IMR-90 (cell line): ENCODE measurements at regions of chr1 and their contacts with region 1.

Region 1: GRCh38 chr1:61453111-61453961 is 271.6 kb downstream of the TM2D1 start:
- DNase-seq: peak; percentile 86
- ATAC-seq: peak; percentile 98
- H3K4me3 ChIP-seq: no peak overlapping the region
- H3K27ac ChIP-seq: no peak overlapping the region
- H3K4me1 ChIP-seq: peaks cover 2% of the 10 kb centered on the region; the same call in 1 of the 2 replicates
- H3K27me3 ChIP-seq: no peaks in the 10 kb centered on the region; the same call in 1 of the 2 replicates
- CTCF ChIP-seq: peak; percentile 90
- POLR2A ChIP-seq: no peak
- RAD21 ChIP-seq: peak; percentile 80

Region 2: DNA sequence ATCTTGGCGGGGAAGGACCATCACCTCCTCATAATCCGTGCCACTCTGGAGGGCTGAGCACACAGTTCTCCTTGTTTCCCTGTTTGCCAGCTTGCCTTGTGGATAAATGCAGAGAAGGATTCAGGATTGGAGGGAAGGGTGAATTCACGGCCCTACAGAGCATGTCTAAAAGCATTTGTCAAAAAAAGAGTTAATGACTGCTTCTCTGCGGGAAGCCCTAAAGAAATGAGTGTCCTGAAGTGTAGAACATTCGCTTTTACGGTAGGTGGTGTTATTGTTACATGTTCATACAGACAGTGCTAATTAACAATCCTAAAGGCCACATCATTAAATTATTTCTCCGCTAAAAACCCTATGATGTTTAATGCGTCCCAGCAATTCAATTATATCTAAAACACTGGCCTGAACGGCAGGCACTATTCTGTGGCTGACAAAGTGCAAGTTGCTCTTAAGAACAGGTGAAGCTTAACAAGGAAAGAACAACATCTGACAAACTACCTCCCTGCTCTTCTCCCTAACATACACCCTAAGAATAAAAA is 483.3 kb before region 1 on chr1:
- CTCF ChIA-PET with region 1: no interaction called
- POLR2A ChIA-PET with region 1: no interaction called
- dilution Hi-C with region 1: no loop called
- in situ Hi-C with region 1: loop called (anchors 10 kb)
- intact Hi-C with region 1: loop called (anchors 1 kb)
- DNase-seq: peak; percentile 23
- ATAC-seq: peak; percentile 67; the same call in 1 of the 2 replicates
- H3K4me3 ChIP-seq: no peak overlapping the region
- H3K27ac ChIP-seq: no peak overlapping the region
- H3K4me1 ChIP-seq: no peaks in the 10 kb centered on the region
- H3K27me3 ChIP-seq: no peaks in the 10 kb centered on the region; the same call in 1 of the 2 replicates
- CTCF ChIP-seq: peak; percentile 48
- POLR2A ChIP-seq: no peak
- RAD21 ChIP-seq: peak; percentile 49

Region 3: DNA sequence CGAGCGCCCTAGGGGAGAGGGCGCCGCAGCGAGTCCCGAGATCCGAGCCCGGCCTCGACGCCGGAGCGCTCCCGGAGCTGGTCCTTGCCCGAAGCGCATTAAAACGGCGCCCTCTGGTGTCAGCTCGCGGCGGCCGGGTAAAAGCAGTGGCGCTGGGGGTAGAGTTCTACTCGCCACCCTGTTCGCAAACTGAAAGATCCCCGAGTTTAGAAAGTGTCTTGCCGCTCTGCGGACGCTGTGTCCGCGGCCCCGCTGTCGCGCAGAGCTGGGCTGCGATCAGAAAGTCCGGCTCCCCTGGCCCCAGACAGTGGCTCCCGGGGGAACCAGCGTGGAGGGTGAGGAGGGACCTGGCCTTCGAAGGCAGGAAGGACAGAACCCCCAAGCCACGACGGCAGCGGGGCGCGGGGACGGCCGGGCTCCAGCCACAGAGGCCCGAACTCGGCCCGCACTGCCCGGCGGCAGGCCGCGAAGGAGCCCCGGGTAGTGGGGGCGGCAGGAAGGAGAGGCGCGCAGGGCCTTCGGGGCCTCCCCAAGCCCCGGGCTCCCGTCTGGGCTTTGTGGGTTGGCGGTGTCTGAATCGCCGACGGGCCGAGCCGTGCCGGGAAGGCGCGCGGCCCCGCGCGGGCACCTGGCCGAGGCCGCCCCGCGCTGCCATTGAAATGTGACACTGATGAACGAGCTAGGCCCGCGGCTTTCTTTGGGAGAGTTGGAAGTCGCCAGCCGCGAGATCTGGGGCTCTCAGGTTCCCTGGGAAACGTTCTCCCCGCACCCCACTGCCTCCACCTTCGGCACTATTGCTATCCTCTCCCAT is 410.1 kb before region 1 on chr1:
- CTCF ChIA-PET with region 1: no interaction called
- POLR2A ChIA-PET with region 1: no interaction called
- dilution Hi-C with region 1: no loop called
- in situ Hi-C with region 1: loop called (anchors 5 kb)
- intact Hi-C with region 1: loop called (anchors 2 kb)
- DNase-seq: peak; percentile 48
- ATAC-seq: peak; percentile 96
- H3K4me3 ChIP-seq: peak overlapping the region; percentile 30
- H3K27ac ChIP-seq: no peak overlapping the region
- H3K4me1 ChIP-seq: no peaks in the 10 kb centered on the region
- H3K27me3 ChIP-seq: peaks cover 17% of the 10 kb centered on the region
- CTCF ChIP-seq: peak; percentile 68
- POLR2A ChIP-seq: no peak
- RAD21 ChIP-seq: peak; percentile 74

Region 4: DNA sequence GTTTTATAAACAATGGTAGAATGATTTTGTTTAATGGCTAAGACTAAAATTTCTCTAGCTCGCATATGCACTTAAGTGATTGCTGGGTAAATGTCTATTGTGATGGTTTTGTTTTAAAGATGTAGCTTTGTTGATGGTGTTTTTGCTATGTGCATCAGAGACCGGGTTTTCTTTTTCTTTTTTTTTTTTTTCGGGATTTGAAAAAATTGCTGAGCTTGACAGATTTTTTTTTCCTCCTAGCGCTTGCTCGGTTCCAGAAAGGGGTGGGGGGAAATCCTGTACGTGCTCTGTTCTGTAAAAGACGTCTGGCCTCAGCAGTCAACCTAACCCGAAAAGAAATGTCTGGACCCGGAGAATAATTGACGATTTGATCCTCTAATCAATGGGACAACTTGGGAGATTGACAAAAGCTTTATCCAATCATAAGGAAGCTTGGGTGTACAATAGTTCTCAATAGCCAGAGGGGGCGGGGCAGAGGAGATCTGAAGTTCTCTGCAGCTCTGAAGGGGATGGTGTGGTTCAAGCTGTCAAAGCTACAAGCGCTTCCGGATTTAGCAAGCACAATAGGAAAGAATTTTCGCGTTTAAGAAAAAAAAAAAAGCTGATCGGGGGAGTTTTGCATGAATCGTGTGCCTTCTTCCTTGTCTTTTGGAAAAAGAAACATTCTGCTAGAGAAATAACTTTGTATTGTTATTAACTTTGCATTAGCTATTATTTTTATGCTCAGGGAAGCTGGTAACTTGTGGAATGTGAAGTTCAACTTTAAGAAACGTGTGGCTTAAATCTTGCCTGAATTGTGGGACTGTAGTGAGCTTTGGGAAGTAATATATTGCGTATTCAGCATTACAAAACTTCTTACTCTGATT is 375.4 kb before region 1 on chr1:
- CTCF ChIA-PET with region 1: no interaction called
- POLR2A ChIA-PET with region 1: no interaction called
- dilution Hi-C with region 1: no loop called
- in situ Hi-C with region 1: no loop called
- intact Hi-C with region 1: loop called (anchors 2 kb)
- DNase-seq: peak; percentile 100
- ATAC-seq: peak; percentile 74
- H3K4me3 ChIP-seq: peak overlapping the region; percentile 82
- H3K27ac ChIP-seq: no peak overlapping the region
- H3K4me1 ChIP-seq: no peaks in the 10 kb centered on the region
- H3K27me3 ChIP-seq: no peaks in the 10 kb centered on the region
- CTCF ChIP-seq: no peak
- POLR2A ChIP-seq: no peak
- RAD21 ChIP-seq: no peak

Region 5: DNA sequence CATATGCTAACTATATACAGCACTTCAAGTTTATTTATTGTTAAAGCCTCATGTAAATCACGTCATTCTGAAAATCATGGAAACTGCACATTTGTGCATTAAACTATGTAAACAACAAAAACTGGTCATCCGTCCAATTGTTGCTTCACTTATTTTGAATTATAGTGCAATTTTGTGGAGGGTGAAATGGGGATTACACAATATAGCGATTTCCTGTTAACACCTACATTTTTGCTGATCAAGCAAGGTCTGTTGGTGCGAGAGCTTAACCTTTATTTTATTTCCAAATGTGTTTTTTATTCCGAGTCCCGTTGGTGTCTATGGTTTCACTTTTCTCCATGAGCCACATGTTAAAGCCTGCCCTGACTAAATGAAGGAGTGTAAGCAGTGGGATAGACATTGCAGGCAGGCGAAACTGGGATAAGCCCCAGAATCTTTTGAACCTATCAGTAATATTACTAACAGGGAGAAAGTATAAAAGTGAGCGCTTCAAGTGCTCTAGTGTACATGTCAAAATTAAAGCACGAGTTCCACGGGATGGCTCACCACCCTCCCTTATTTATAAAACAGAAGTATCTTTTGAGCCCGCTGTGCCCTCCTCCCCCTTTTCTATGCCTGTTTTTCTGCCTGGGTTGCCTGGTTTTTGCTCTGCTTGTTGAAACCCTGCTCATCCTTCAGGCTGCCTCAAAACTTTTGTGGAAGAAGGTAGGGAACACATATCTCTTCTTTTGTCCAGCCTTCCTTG is 250.3 kb before region 1 on chr1:
- CTCF ChIA-PET with region 1: no interaction called
- POLR2A ChIA-PET with region 1: no interaction called
- dilution Hi-C with region 1: no loop called
- in situ Hi-C with region 1: no loop called
- intact Hi-C with region 1: loop called (anchors 5 kb)
- DNase-seq: peak; percentile 53
- ATAC-seq: peak; percentile 81
- H3K4me3 ChIP-seq: peak overlapping the region; percentile 36; the same call in 1 of the 2 replicates
- H3K27ac ChIP-seq: peak overlapping the region; percentile 74; the same call in 1 of the 2 replicates
- H3K4me1 ChIP-seq: peaks cover 2% of the 10 kb centered on the region; the same call in 1 of the 2 replicates
- H3K27me3 ChIP-seq: no peaks in the 10 kb centered on the region
- CTCF ChIP-seq: no peak
- POLR2A ChIP-seq: no peak
- RAD21 ChIP-seq: no peak